ENCODE measurements at regions of chr2 and their contacts with region 1.

Region 1: GRCh38 chr2:103814016-103814415 is 1039.9 kb upstream of the POU3F3 start:
- DNase-seq: no peak
- ATAC-seq: no peak

Region 2: DNA sequence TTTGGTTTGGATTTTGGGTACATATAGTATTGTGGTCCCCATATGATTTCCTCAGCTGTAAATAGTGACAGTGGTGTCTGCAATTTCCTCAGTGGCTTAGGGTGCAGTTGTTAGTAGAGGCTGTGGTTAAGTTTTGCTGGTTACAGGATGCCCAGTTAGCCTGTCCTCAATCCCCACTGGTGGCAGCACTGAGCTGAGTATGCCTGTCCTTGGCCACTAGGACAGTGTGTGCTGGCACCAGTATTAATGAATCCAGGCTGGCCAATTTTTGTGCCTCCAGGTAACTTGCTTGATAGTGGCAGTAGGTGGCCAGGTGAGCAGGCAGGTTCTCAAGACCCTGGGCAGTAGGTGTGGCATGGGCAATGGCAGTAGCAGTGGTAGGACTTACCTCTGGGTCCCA is 79.1 kb before region 1 on chr2:
- intact Hi-C with region 1: loop called (anchors 2 kb)
- DNase-seq: no peak
- ATAC-seq: no peak